Naive thymus-derived CD4-positive, alpha-beta T cell (primary cell): ENCODE measurements at regions of chr18 and their contacts with region 1.

Region 1: GRCh38 chr18:11980555-11981382 is 538 bp upstream of the IMPA2 start:
- DNase-seq: peak; percentile 86 to 98 (median 92)
- ATAC-seq: peak; percentile 95
- H3K4me3 ChIP-seq: peak overlapping the region; percentile 64
- H3K4me3 Mint-ChIP-seq: peak overlapping the region; percentile 62 to 89 (median 86)
- H3K27ac ChIP-seq: peak overlapping the region; percentile 56
- H3K27ac Mint-ChIP-seq: peak overlapping the region in 7 of 9 donors; percentile 26 to 80 (median 44)
- H3K4me1 ChIP-seq: peaks cover 0 to 5% of the 10 kb centered on the region in 2 donors
- H3K4me1 Mint-ChIP-seq: peaks cover 0 to 27% (median 13%) of the 10 kb centered on the region in 7 donors
- H3K27me3 ChIP-seq: no peaks in the 10 kb centered on the region
- H3K27me3 Mint-ChIP-seq: peaks cover 0 to 17% (median 0%) of the 10 kb centered on the region in 5 donors

Region 2: GRCh38 chr18:10525371-10526210 is 1455.2 kb before region 1 on chr18 and contains the start of gene NAPG:
- CTCF ChIA-PET with region 1: no interaction called
- POLR2A ChIA-PET with region 1: no interaction called
- intact Hi-C with region 1: loop called in 1 of 2 experiments (anchors 5 kb)
- DNase-seq: peak; percentile 88 to 94 (median 91)
- ATAC-seq: peak; percentile 94
- H3K4me3 ChIP-seq: peak within 1 kb of the TSS; percentile 93
- H3K4me3 Mint-ChIP-seq: peak within 1 kb of the TSS; percentile 94 to 99 (median 98)
- H3K27ac ChIP-seq: peak within 1 kb of the TSS; percentile 76
- H3K27ac Mint-ChIP-seq: peak within 1 kb of the TSS; percentile 84 to 99 (median 96)
- H3K4me1 ChIP-seq: peaks cover 4 to 22% of the 10 kb centered on the region in 2 donors
- H3K4me1 Mint-ChIP-seq: peaks cover 43 to 62% (median 53%) of the 10 kb centered on the region in 7 donors
- H3K27me3 ChIP-seq: no peaks in the 10 kb centered on the region
- H3K27me3 Mint-ChIP-seq: peaks cover 0 to 10% (median 0%) of the 10 kb centered on the region in 5 donors
- total RNA-seq, gene NAPG: 28.1 to 35.7 (median 30.0) TPM

Region 3: GRCh38 chr18:11851146-11851805 is 129.5 kb before region 1 on chr18 and contains the start of gene CHMP1B:
- CTCF ChIA-PET with region 1: no interaction called
- POLR2A ChIA-PET with region 1: interaction called, 17 read pairs
- intact Hi-C with region 1: loop called (anchors 1 kb)
- DNase-seq: peak; percentile 95 to 97 (median 97)
- ATAC-seq: peak; percentile 91
- H3K4me3 ChIP-seq: peak within 1 kb of the TSS; percentile 88
- H3K4me3 Mint-ChIP-seq: peak within 1 kb of the TSS; percentile 89 to 100 (median 100)
- H3K27ac ChIP-seq: peak within 1 kb of the TSS; percentile 96
- H3K27ac Mint-ChIP-seq: peak within 1 kb of the TSS; percentile 97 to 100 (median 100)
- H3K4me1 ChIP-seq: peaks cover 19 to 21% of the 10 kb centered on the region in 2 donors
- H3K4me1 Mint-ChIP-seq: peaks cover 16 to 62% (median 50%) of the 10 kb centered on the region in 7 donors
- H3K27me3 ChIP-seq: no peaks in the 10 kb centered on the region
- H3K27me3 Mint-ChIP-seq: peaks cover 0 to 13% (median 0%) of the 10 kb centered on the region in 5 donors
- total RNA-seq, gene CHMP1B: 27.2 to 115 (median 56.1) TPM

Region 4: DNA sequence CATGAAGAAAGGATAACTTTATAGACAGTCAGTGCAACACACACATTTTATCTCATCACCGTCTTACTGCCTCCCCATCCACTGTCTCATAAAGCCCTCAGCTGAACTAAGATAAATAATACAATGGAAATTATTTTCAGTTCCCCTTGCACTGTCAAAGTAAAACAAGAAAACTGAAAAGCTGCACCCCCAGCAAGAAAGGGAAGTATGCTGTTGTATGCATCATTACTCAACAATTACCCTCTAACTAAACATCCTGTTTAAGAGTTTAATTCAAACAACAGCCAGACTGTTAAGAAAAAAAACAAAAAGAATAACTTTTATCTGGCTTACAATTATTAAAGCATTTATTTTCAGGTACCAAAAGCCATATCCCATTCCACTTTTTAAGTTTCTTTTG is 97.6 kb before region 1 on chr18:
- CTCF ChIA-PET with region 1: no interaction called
- POLR2A ChIA-PET with region 1: no interaction called
- intact Hi-C with region 1: no loop called
- DNase-seq: no peak
- ATAC-seq: peak; percentile 76
- H3K4me3 ChIP-seq: no peak overlapping the region
- H3K4me3 Mint-ChIP-seq: no peak overlapping the region
- H3K27ac ChIP-seq: no peak overlapping the region
- H3K27ac Mint-ChIP-seq: peak overlapping the region in 1 of 9 donors; percentile 26
- H3K4me1 ChIP-seq: no peaks in the 10 kb centered on the region
- H3K4me1 Mint-ChIP-seq: peaks cover 0 to 7% (median 0%) of the 10 kb centered on the region in 7 donors
- H3K27me3 ChIP-seq: no peaks in the 10 kb centered on the region
- H3K27me3 Mint-ChIP-seq: no peaks in the 10 kb centered on the region

Region 5: DNA sequence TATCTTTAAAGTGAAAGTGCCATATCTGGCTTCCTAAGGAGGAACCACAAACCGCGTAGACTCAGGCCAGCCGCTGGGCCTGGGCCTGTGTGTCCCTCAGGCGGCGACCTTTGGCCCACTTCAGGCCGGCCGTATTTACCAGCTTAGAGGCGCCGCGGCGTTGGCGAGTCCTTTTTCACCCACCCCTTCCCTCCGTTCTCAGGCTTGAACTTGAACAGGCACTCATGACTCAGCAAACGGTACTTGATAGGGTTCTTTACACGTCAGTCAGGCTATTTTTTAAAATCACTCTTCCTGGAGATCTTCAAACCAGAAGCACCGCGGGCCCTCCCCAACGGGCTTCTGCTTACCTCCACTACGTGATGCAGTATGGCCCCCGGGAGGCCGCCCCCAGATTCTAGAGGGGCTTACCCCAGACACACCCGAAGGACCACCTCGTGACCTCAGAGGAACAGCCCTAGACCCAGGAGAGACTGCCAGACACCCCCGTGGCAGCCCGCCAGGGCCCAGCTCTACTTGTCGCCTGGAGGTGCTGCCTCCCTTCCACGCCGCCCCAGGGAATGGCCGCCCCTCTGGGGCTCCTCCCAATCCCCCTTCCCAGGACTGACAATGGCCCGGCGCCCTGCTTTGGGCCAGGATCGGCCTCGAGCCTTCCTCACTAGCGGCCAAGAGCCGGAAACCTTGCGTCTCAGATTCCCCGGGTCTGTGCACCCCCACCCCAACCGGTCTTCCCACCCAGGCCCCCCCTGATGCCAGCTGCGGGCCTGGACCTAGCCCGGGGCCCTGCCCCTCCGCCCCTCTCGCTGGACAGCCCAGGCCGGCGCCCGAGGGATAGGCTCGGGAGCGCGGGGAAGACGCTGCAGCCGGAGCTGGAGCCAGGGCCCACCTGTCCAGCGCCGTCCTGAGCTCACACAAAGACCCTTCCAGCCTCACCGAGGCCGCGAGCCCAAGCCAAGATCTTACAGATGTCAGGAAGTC is 33.3 kb before region 1 on chr18:
- CTCF ChIA-PET with region 1: no interaction called
- POLR2A ChIA-PET with region 1: interaction called, 3 read pairs
- intact Hi-C with region 1: loop called (anchors 1 kb)
- DNase-seq: peak; percentile 25 to 71 (median 55)
- ATAC-seq: peak; percentile 90
- H3K4me3 ChIP-seq: peak overlapping the region; percentile 67
- H3K4me3 Mint-ChIP-seq: peak overlapping the region; percentile 82 to 97 (median 88)
- H3K27ac ChIP-seq: peak overlapping the region; percentile 57
- H3K27ac Mint-ChIP-seq: peak overlapping the region; percentile 73 to 97 (median 85)
- H3K4me1 ChIP-seq: peaks cover 0 to 4% of the 10 kb centered on the region in 2 donors
- H3K4me1 Mint-ChIP-seq: peaks cover 4 to 17% (median 10%) of the 10 kb centered on the region in 7 donors
- H3K27me3 ChIP-seq: no peaks in the 10 kb centered on the region
- H3K27me3 Mint-ChIP-seq: no peaks in the 10 kb centered on the region

Region 6: GRCh38 chr18:12038639-12039417 is 58.1 kb after region 1 on chr18:
- CTCF ChIA-PET with region 1: no interaction called
- POLR2A ChIA-PET with region 1: no interaction called
- intact Hi-C with region 1: loop called (anchors 5 kb)
- DNase-seq: peak; percentile 41 to 84 (median 68)
- ATAC-seq: peak; percentile 95
- H3K4me3 ChIP-seq: peak overlapping the region; percentile 52
- H3K4me3 Mint-ChIP-seq: peak overlapping the region; percentile 59 to 79 (median 72)
- H3K27ac ChIP-seq: no peak overlapping the region
- H3K27ac Mint-ChIP-seq: no peak overlapping the region
- H3K4me1 ChIP-seq: no peaks in the 10 kb centered on the region
- H3K4me1 Mint-ChIP-seq: peaks cover 0 to 19% (median 0%) of the 10 kb centered on the region in 7 donors
- H3K27me3 ChIP-seq: peaks cover 0 to 3% of the 10 kb centered on the region in 2 donors
- H3K27me3 Mint-ChIP-seq: peaks cover 10 to 21% (median 14%) of the 10 kb centered on the region in 5 donors

Region 7: DNA sequence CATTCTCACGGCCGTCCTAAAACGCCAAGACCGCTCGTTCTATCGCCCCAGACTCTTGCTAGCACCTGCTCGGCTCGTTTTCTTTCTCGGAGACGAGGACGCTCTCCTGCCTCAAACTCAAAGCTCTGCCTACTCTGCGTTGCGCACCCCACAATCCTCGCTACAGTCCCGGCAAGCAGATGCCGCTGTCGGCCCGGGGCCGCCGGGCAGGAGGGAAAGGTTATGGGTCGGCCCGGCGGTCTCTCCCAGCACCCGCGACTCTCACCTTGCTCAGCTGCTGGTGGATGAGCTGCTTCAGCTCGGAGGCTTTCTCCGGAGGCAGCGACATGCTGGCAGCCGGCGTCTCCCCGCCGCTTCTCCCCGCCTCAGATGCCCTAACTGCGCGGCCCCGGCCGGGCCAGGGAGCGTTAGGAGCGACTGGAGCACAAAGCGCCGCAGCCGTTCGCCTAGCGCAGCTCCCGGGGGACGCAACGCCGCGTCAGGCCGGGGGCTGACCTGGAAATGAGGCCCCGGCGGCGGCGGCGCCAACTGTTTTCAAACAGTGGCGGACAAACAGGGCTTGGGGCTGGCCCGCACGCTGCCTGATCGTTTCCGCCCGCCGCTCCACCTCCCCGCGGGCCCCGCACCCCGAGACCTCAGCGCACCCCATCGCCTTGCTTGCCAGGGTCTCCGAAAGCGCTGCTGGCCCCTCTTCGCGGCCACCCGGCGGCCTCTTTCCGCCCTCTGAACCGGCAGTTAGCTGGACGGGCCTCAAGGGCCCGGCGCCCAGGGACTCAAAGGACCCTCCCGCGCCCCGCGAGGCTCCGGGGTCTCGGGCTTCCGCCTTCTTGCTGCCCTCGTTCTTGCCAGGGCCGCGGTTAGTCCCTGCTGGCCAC is 721.7 kb after region 1 on chr18 and contains the starts of genes CEP76 and PSMG2:
- CTCF ChIA-PET with region 1: no interaction called
- POLR2A ChIA-PET with region 1: interaction called, 3 read pairs
- intact Hi-C with region 1: loop called (anchors 2 to 5 kb)
- DNase-seq: peak; percentile 77 to 88 (median 84)
- ATAC-seq: peak; percentile 89
- H3K4me3 ChIP-seq: peak within 1 kb of the TSS; percentile 97
- H3K4me3 Mint-ChIP-seq: peak within 1 kb of the TSS; percentile 92 to 99 (median 98)
- H3K27ac ChIP-seq: peak within 1 kb of the TSS; percentile 96
- H3K27ac Mint-ChIP-seq: peak within 1 kb of the TSS; percentile 91 to 100 (median 96)
- H3K4me1 ChIP-seq: peaks cover 17 to 20% of the 10 kb centered on the region in 2 donors
- H3K4me1 Mint-ChIP-seq: peaks cover 36 to 63% (median 50%) of the 10 kb centered on the region in 7 donors
- H3K27me3 ChIP-seq: no peaks in the 10 kb centered on the region
- H3K27me3 Mint-ChIP-seq: no peaks in the 10 kb centered on the region
- total RNA-seq, gene CEP76: 6.9 to 13.2 (median 11.1) TPM
- total RNA-seq, gene PSMG2: 49.9 to 104 (median 59.9) TPM

Region 8: DNA sequence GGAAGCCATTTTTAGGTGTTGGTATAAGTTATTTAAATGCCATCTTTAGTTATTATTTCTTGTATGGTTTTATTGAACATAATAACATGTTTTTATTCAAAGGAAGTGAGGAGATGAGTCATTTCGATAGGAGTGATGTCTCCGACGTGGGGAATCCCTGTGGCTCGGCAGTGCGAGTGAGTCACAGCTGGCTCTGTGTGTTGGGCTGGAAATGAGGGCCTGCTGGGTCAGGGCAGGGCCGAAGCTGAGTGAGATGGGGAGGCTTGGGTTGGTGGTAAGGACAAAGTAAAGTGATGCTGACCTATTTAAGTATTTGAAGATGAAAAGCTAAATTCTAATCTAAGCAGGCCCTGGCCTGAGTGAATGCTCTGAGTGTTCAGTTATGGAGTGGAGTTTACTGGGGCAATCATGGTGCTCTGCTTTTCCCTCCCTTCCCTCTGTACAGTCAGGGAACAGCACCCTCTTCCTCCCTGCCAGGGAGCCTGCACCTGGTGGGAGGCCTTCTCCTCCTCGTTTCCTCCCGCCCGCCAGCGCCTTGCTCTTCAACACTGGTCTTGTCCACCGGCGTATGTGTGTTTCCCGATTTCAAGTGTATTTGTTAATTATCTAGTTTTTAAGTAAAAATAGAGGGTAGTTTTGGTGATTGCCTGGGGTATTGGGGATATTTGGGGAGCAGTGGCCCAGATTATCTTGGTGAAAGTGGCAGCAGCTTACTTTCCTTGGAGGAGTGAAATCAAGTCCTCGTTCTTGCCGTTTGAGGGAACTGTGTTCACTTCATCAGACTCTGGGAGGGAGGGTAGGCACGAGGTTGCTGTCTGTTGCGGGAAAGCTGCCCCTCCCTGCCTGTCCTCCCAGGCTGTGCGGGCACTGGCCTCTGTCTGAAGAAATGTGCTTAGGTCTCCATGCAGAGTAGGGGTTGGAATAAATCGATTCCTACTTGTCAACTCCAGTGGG is 1394.8 kb after region 1 on chr18:
- CTCF ChIA-PET with region 1: no interaction called
- POLR2A ChIA-PET with region 1: no interaction called
- intact Hi-C with region 1: loop called in 1 of 2 experiments (anchors 10 kb)
- DNase-seq: peak in 7 of 9 donors; percentile 29 to 81 (median 54)
- ATAC-seq: peak; percentile 77
- H3K4me3 ChIP-seq: peak overlapping the region; percentile 34
- H3K4me3 Mint-ChIP-seq: peak overlapping the region; percentile 56 to 86 (median 78)
- H3K27ac ChIP-seq: peak overlapping the region; percentile 83
- H3K27ac Mint-ChIP-seq: peak overlapping the region; percentile 92 to 99 (median 96)
- H3K4me1 ChIP-seq: peaks cover 10 to 64% of the 10 kb centered on the region in 2 donors
- H3K4me1 Mint-ChIP-seq: peaks cover 32 to 85% (median 77%) of the 10 kb centered on the region in 7 donors
- H3K27me3 ChIP-seq: no peaks in the 10 kb centered on the region
- H3K27me3 Mint-ChIP-seq: no peaks in the 10 kb centered on the region